ENCODE measurements at regions of chr1 and their contacts with region 1.

Region 1: DNA sequence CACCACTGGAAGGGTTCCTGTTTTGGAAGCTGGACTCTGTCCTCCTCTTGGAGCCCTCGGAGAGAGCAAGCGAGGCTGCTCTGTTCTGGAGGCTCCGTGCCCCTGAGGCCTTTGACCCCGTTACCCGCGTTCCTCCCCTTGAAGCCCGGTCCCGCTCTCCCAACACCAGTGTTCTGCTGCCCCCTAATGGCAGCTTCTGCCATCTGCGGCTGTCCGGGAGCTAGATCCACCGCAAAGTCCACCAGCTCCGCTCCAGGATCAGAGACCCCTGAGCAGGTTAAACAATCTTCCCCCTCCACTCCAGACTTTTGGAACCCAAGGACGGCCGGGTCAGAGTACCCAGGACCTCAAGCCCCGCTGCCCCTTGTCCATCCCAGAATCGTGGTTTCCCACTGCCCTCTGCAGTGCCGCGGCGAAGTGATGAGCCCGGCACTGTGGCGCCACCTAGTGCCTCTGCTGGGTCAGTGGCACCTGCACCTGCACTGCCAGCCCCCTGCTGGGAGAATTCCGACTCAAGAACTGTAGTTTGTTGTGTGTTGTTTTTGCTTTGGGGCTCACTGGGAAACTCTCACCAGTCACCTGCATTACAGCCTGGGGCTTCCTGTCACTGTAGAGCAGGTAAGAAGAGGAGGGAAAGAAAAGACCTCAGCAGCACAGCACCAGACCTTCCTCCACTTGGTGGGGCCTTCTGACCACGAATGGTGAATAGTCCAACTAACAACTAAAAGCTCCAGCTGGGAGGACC is 63.5 kb upstream of the NFASC start:
- DNase-seq: peak; percentile 94
- ATAC-seq: peak; percentile 95
- H3K4me3 ChIP-seq: peak overlapping the region in 4 of 5 experiments; percentile 29 to 73 (median 56)
- H3K4me3 Mint-ChIP-seq: peak overlapping the region; percentile 87
- H3K27ac ChIP-seq: no peak overlapping the region
- H3K27ac Mint-ChIP-seq: peak overlapping the region; percentile 70
- H3K4me1 ChIP-seq: peaks cover 15 to 22% of the 10 kb centered on the region in 2 donors
- H3K4me1 Mint-ChIP-seq: peaks cover 18% of the 10 kb centered on the region
- H3K27me3 ChIP-seq: no peaks in the 10 kb centered on the region
- H3K27me3 Mint-ChIP-seq: peaks cover 3% of the 10 kb centered on the region
- CTCF ChIP-seq: peak; percentile 100

Region 2: GRCh38 chr1:204431310-204432165 is 375.6 kb before region 1 on chr1:
- CTCF ChIA-PET with region 1: interaction called, 43 read pairs
- POLR2A ChIA-PET with region 1: no interaction called
- intact Hi-C with region 1: loop called (anchors 1 kb)
- DNase-seq: peak; percentile 84
- ATAC-seq: peak; percentile 77
- H3K4me3 ChIP-seq: no peak overlapping the region
- H3K4me3 Mint-ChIP-seq: no peak overlapping the region
- H3K27ac ChIP-seq: no peak overlapping the region
- H3K27ac Mint-ChIP-seq: peak overlapping the region; percentile 1
- H3K4me1 ChIP-seq: no peaks in the 10 kb centered on the region
- H3K4me1 Mint-ChIP-seq: no peaks in the 10 kb centered on the region
- H3K27me3 ChIP-seq: no peaks in the 10 kb centered on the region
- H3K27me3 Mint-ChIP-seq: no peaks in the 10 kb centered on the region
- CTCF ChIP-seq: peak; percentile 93

Region 3: DNA sequence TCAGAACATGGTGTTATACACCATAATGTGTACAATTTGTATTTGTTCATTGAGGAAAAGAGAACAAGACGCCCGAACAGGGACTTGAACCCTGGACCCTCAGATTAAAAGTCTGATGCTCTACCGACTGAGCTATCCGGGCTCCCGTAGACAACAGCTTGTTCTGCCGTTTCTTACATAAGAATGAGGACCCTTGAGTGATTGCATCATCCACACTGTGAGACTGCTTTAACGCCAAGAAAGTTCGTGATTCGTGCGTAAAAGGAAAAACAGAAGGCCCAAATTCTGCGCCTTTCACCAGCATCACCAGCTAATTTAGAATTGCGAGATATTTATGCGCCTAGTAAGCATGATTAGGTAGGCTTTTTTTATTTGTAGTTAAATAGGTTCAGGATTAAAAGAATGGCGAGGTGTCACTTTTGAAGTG is 300.1 kb before region 1 on chr1:
- CTCF ChIA-PET with region 1: interaction called, 18 read pairs
- POLR2A ChIA-PET with region 1: no interaction called
- intact Hi-C with region 1: loop called (anchors 5 kb)
- DNase-seq: peak; percentile 97
- ATAC-seq: peak; percentile 75
- H3K4me3 ChIP-seq: peak overlapping the region; percentile 51 to 90 (median 67)
- H3K4me3 Mint-ChIP-seq: peak overlapping the region; percentile 97
- H3K27ac ChIP-seq: peak overlapping the region; percentile 94 to 99
- H3K27ac Mint-ChIP-seq: peak overlapping the region; percentile 99
- H3K4me1 ChIP-seq: peaks cover 48 to 52% of the 10 kb centered on the region in 2 donors
- H3K4me1 Mint-ChIP-seq: peaks cover 62% of the 10 kb centered on the region
- H3K27me3 ChIP-seq: no peaks in the 10 kb centered on the region
- H3K27me3 Mint-ChIP-seq: no peaks in the 10 kb centered on the region
- CTCF ChIP-seq: no peak

Region 4: DNA sequence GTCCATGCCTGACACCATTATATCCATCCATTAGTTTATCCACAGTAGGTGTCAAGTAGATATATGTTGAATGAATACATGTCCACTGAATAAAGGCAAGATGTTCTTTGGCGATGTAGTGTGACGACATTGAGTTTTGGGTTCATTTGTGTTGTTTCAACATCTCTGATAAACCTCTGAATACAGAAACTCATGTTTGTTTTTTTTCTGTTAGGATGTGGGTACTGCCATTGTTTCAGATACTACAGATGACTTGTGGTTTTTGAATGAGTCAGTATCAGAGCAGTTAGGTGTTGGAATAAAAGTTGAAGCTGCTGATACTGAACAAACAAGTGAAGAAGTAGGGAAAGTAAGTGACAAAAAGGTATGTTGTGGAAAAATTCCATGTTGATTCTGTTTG is 262.8 kb before region 1 on chr1:
- CTCF ChIA-PET with region 1: interaction called, 12 read pairs
- POLR2A ChIA-PET with region 1: no interaction called
- intact Hi-C with region 1: no loop called
- DNase-seq: no peak
- ATAC-seq: no peak
- H3K4me3 ChIP-seq: no peak overlapping the region
- H3K4me3 Mint-ChIP-seq: no peak overlapping the region
- H3K27ac ChIP-seq: peak overlapping the region in 1 of 2 donors; percentile 72
- H3K27ac Mint-ChIP-seq: peak overlapping the region; percentile 32
- H3K4me1 ChIP-seq: peaks cover 4 to 6% of the 10 kb centered on the region in 2 donors
- H3K4me1 Mint-ChIP-seq: peaks cover 24% of the 10 kb centered on the region
- H3K27me3 ChIP-seq: no peaks in the 10 kb centered on the region
- H3K27me3 Mint-ChIP-seq: no peaks in the 10 kb centered on the region
- CTCF ChIP-seq: no peak

Region 5: DNA sequence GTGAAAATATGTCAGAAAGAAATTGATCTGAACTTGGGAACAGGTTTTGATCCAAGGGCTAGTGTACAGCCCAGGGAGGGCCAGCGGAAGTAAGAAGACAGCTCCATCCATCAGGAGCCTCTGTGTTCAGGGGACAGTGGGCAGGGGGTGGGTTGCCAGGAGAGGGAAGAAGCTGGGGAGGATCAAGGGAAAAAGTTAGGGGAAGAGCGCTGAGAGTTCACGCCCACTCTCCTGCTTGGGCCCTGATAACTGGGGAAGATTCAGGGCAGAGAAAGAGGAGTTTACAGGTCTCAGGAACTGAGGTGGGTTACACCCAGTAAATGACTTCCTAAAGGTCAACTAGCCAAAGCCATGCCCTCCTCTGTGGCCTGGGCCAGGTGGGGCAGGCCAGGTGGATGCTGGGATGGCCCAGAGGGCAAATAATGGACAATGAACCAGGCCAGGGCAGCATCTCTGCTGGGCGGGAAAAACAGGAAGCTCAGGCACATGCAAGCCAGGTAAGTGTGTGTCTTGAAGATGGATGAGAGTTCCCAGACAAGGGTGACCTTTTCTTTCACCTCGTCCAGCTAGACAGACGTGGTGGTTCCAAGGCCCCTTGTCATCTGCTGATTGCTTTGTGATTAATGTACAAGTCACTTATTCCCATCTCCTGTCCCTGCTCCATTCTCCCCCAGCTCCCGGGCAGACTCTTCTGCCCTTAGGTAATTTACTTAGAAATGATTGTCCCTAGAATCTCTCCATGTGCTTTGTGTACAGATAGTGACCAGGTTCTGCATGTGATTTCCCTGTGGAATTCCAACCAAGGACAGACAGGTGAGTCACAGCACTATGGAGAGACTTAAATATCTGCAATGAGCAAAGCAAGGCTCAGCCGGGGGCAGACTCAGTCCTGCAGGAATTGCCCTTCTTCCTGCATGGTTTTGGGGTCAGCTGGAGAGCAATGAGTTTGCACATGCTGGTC is 233.9 kb before region 1 on chr1:
- CTCF ChIA-PET with region 1: interaction called, 221 read pairs
- POLR2A ChIA-PET with region 1: interaction called, 4 read pairs
- intact Hi-C with region 1: no loop called
- DNase-seq: no peak
- ATAC-seq: no peak
- H3K4me3 ChIP-seq: no peak overlapping the region
- H3K4me3 Mint-ChIP-seq: no peak overlapping the region
- H3K27ac ChIP-seq: no peak overlapping the region
- H3K27ac Mint-ChIP-seq: no peak overlapping the region
- H3K4me1 ChIP-seq: peaks cover 2 to 4% of the 10 kb centered on the region in 2 donors
- H3K4me1 Mint-ChIP-seq: peaks cover 7% of the 10 kb centered on the region
- H3K27me3 ChIP-seq: no peaks in the 10 kb centered on the region
- H3K27me3 Mint-ChIP-seq: no peaks in the 10 kb centered on the region
- CTCF ChIP-seq: no peak

Region 6: DNA sequence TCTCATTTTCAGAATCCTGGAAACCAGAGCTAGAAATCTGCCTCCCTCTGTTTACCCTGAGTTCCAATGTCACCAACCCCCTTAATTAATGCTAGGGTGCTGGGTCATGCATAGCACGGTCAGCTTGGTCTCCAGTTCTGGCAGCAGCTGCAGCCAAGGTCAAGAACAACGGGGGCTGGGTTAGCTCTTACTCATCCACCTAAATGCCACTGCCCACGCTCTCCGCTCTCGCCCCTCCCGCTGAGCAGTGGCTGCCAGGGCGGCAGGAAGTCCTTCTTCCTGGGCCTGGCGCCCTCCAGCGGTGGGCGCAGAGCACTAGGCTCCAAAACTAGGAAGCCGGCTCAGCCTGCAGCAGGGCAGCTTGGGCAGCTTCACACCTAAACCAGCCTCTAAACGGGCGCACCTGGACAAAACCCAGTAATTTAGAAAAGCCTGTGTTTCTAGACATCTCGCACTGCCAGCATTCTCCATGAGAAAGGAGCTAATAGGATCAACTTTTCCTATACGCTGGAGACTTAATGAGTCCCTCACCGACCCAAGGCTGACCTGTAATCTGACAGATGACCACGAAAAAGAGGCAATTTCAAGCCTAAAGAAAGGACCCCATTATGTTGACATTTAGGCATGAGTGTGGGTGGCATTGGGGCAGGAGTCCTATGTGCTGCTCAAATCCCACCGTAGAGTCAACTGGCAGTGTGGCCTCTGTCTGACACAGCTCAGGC is 43.2 kb before region 1 on chr1:
- CTCF ChIA-PET with region 1: interaction called, 12 read pairs
- POLR2A ChIA-PET with region 1: no interaction called
- intact Hi-C with region 1: no loop called
- DNase-seq: peak; percentile 75
- ATAC-seq: peak; percentile 97
- H3K4me3 ChIP-seq: no peak overlapping the region
- H3K4me3 Mint-ChIP-seq: no peak overlapping the region
- H3K27ac ChIP-seq: no peak overlapping the region
- H3K27ac Mint-ChIP-seq: no peak overlapping the region
- H3K4me1 ChIP-seq: peaks cover 7 to 8% of the 10 kb centered on the region in 2 donors
- H3K4me1 Mint-ChIP-seq: peaks cover 6% of the 10 kb centered on the region
- H3K27me3 ChIP-seq: peaks cover 0 to 18% (median 1%) of the 10 kb centered on the region in 4 experiments
- H3K27me3 Mint-ChIP-seq: peaks cover 30% of the 10 kb centered on the region
- CTCF ChIP-seq: peak; percentile 88

Region 7: GRCh38 chr1:204826970-204827369 is 19.9 kb after region 1 on chr1:
- CTCF ChIA-PET with region 1: interaction called, 86 read pairs
- POLR2A ChIA-PET with region 1: interaction called, 5 read pairs
- intact Hi-C with region 1: no loop called
- DNase-seq: peak; percentile 26
- ATAC-seq: no peak
- H3K4me3 ChIP-seq: no peak overlapping the region
- H3K4me3 Mint-ChIP-seq: no peak overlapping the region
- H3K27ac ChIP-seq: no peak overlapping the region
- H3K27ac Mint-ChIP-seq: no peak overlapping the region
- H3K4me1 ChIP-seq: peaks cover 10 to 16% of the 10 kb centered on the region in 2 donors
- H3K4me1 Mint-ChIP-seq: peaks cover 11% of the 10 kb centered on the region
- H3K27me3 ChIP-seq: peaks cover 0 to 44% (median 19%) of the 10 kb centered on the region in 4 experiments
- H3K27me3 Mint-ChIP-seq: peaks cover 62% of the 10 kb centered on the region
- CTCF ChIP-seq: no peak

Measured in B cell (primary cell).